ENCODE measurements at regions of chr4 and their contacts with region 1.

Region 1: GRCh38 chr4:153488006-153488891 is 22.1 kb downstream of the TMEM131L start:
- DNase-seq: peak; percentile 86
- H3K4me3 Mint-ChIP-seq: peak overlapping the region; percentile 69
- H3K27ac Mint-ChIP-seq: peak overlapping the region; percentile 95
- H3K4me1 Mint-ChIP-seq: peaks cover 81% of the 10 kb centered on the region
- H3K27me3 Mint-ChIP-seq: no peaks in the 10 kb centered on the region

Region 2: GRCh38 chr4:153432968-153433753 is 55.1 kb before region 1 on chr4:
- CTCF ChIA-PET with region 1: interaction called, 7 read pairs
- intact Hi-C with region 1: loop called (anchors 2 kb)
- DNase-seq: peak; percentile 89
- H3K4me3 Mint-ChIP-seq: peak overlapping the region; percentile 78
- H3K27ac Mint-ChIP-seq: peak overlapping the region; percentile 91
- H3K4me1 Mint-ChIP-seq: peaks cover 76% of the 10 kb centered on the region
- H3K27me3 Mint-ChIP-seq: no peaks in the 10 kb centered on the region

Region 3: GRCh38 chr4:153471691-153472080 is 16.6 kb before region 1 on chr4:
- CTCF ChIA-PET with region 1: interaction called, 19 read pairs
- intact Hi-C with region 1: loop called (anchors 1 kb)
- DNase-seq: peak; percentile 85
- H3K4me3 Mint-ChIP-seq: peak overlapping the region; percentile 95
- H3K27ac Mint-ChIP-seq: peak overlapping the region; percentile 96
- H3K4me1 Mint-ChIP-seq: peaks cover 70% of the 10 kb centered on the region
- H3K27me3 Mint-ChIP-seq: no peaks in the 10 kb centered on the region

Region 4: DNA sequence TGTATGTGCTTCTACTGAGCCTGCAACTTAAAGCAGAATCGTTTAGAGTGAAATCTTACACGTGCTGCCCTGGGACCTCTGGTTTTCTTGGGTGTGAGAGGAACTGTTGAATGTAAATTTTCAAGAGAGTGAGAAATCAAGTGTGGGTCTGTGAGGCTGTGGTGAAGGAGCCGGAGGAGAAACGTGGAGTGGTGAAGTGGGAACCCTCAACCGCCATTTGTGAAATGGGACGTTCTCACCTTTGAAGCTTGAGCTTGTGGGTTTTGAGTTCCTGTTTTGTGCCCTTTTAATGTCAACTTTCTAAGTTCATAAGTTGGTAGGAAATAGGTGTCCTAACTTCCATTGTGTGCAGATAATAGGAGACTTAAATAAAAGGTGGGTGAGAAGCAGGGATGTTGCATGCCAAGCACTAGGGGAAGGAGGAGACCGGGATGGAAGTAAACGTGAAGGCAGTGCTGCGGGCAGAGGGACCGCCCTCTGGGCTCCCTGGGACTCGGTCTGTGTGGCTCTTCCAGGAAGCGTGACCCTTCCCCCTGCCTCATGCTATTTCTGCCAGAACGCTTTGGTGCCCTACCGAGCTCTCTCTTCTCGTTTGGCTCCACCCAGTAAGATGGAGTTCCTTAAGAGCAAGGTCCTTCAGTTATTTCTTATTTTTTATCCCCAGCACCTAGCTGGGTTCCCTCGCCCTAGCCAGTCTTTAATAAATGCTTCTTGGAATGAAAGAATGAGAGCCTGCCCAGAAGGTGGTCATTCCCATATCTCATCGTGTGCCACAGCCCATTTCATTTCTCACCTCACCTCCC is 34.0 kb after region 1 on chr4:
- CTCF ChIA-PET with region 1: interaction called, 3 read pairs
- intact Hi-C with region 1: loop called (anchors 1 kb)
- DNase-seq: peak; percentile 74
- H3K4me3 Mint-ChIP-seq: peak overlapping the region; percentile 69
- H3K27ac Mint-ChIP-seq: peak overlapping the region; percentile 97
- H3K4me1 Mint-ChIP-seq: peaks cover 93% of the 10 kb centered on the region
- H3K27me3 Mint-ChIP-seq: no peaks in the 10 kb centered on the region

Region 5: GRCh38 chr4:153735906-153736461 is 247.7 kb after region 1 on chr4:
- CTCF ChIA-PET with region 1: no interaction called
- intact Hi-C with region 1: no loop called
- DNase-seq: no peak
- H3K4me3 Mint-ChIP-seq: no peak overlapping the region
- H3K27ac Mint-ChIP-seq: no peak overlapping the region
- H3K4me1 Mint-ChIP-seq: peaks cover 9% of the 10 kb centered on the region
- H3K27me3 Mint-ChIP-seq: no peaks in the 10 kb centered on the region

Measured in activated naive CD4-positive, alpha-beta T cell treated with anti-CD3 and anti-CD28 coated beads for 36 hours (primary cell).